Esophagus muscularis mucosa (tissue), 4 donors: ENCODE measurements at regions of chr3 and their contacts with region 1.

Region 1: DNA sequence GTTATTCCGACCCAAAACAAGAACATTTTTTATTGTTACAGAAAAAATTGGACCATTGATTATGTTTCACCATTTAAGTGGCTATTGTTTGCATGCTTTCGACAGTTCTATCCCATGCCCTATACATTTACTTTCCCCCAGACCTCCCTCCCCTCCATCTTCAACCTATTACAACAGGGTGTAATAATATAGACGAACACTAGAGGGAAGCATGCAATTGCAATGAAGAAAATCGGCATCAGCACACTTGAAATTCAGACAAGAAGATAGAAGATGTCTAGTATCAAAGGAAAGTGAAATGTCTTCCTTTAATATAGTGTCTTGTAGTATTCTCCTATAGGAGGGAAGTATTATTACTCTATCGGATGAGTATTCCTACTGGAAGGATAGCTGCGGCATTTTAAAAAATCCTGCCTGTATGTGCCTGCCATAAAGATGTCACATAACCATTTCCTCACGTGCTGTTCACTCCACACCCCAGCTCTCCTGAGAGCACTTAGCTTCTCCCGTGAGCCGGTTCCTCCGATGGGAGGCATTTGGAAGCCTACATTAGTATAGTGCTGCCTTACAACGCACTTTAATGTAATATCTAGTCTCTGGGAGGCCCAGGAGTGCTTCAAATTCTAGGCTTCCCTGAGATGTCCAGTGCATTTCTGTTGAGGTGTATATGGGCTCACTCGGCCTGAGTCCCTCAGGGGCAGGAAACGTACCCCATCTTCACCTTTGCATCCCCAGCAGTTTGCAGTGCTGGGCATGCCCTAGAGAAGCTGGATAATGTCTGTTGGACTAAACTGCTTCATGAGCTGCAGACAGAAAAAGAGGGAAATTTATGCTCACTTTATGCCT is 17.8 kb upstream of the ERICH6 start:
- DNase-seq: no peak
- H3K4me3 ChIP-seq: peak overlapping the region in 1 of 4 donors; percentile 19
- H3K27ac ChIP-seq: no peak overlapping the region
- H3K4me1 ChIP-seq: peaks cover 4 to 7% (median 5%) of the 10 kb centered on the region in 4 donors
- H3K27me3 ChIP-seq: no peaks in the 10 kb centered on the region
- CTCF ChIP-seq: peak; percentile 83 to 85 (median 83)
- EP300 ChIP-seq: no peak
- POLR2A ChIP-seq: no peak

Region 2: DNA sequence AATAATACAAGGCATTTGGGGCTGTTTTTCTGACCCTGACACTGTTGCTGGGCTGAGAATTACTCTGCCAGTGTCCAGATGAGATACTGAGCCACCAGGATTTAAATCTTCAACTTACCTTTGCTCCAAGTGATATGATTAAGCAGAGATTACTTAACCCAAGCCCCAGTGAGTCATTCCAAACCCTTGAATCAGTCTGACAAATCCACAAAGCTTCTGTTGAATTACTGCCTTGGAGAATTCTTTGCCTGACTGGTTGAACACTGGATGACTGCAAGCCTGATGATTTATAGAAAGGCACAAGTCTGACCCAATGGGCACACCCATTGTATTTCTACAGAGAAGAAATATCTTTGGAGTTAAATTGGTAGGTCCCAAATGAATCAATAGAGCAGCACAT is 401.6 kb before region 1 on chr3:
- intact Hi-C with region 1: no loop called
- DNase-seq: no peak
- H3K4me3 ChIP-seq: no peak overlapping the region
- H3K27ac ChIP-seq: no peak overlapping the region
- H3K4me1 ChIP-seq: peaks cover 0 to 5% (median 0%) of the 10 kb centered on the region in 4 donors
- H3K27me3 ChIP-seq: no peaks in the 10 kb centered on the region
- CTCF ChIP-seq: no peak
- EP300 ChIP-seq: no peak
- POLR2A ChIP-seq: no peak

Region 3: GRCh38 chr3:150763122-150763841 is 41.8 kb after region 1 on chr3 and contains the start of gene SIAH2:
- intact Hi-C with region 1: loop called (anchors 5 kb)
- DNase-seq: peak; percentile 98
- H3K4me3 ChIP-seq: peak within 1 kb of the TSS; percentile 80 to 93 (median 88)
- H3K27ac ChIP-seq: peak within 1 kb of the TSS; percentile 94 to 99 (median 98)
- H3K4me1 ChIP-seq: peaks cover 23 to 42% (median 40%) of the 10 kb centered on the region in 4 donors
- H3K27me3 ChIP-seq: no peaks in the 10 kb centered on the region
- CTCF ChIP-seq: no peak
- EP300 ChIP-seq: peak; percentile 46
- POLR2A ChIP-seq: peak; percentile 63
- total RNA-seq, gene SIAH2: 27.8 to 55.8 (median 43.3) TPM

Region 4: GRCh38 chr3:150870396-150870795 is 148.9 kb after region 1 on chr3:
- intact Hi-C with region 1: loop called (anchors 1 kb)
- DNase-seq: no peak
- H3K4me3 ChIP-seq: no peak overlapping the region
- H3K27ac ChIP-seq: no peak overlapping the region
- H3K4me1 ChIP-seq: peaks cover 0 to 3% (median 0%) of the 10 kb centered on the region in 4 donors
- H3K27me3 ChIP-seq: no peaks in the 10 kb centered on the region
- CTCF ChIP-seq: no peak
- EP300 ChIP-seq: no peak
- POLR2A ChIP-seq: no peak

Region 5: DNA sequence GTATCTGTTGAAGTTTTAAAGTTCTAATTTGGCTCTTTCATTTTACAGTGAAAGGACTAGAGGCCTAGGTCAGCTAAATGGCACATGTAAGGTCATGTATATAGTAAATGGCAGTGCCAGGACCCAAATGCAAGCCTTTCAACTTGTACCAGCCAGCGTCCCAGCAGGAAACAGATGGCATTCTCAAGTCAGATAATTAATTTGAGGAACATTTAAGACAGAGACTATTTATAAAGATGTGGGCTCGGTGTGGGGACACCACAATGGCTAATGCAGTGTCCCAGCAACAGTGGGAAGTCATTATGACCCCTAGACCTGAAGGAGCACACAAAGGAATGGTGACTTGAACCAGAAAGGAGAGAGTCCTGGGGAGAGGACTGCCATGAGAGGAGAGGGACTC is 177.6 kb after region 1 on chr3:
- intact Hi-C with region 1: no loop called
- DNase-seq: no peak
- H3K4me3 ChIP-seq: no peak overlapping the region
- H3K27ac ChIP-seq: no peak overlapping the region
- H3K4me1 ChIP-seq: no peaks in the 10 kb centered on the region
- H3K27me3 ChIP-seq: no peaks in the 10 kb centered on the region
- CTCF ChIP-seq: no peak
- EP300 ChIP-seq: no peak
- POLR2A ChIP-seq: no peak

Region 6: GRCh38 chr3:151146071-151146730 is 424.7 kb after region 1 on chr3:
- intact Hi-C with region 1: loop called (anchors 5 kb)
- DNase-seq: no peak
- H3K4me3 ChIP-seq: peak overlapping the region in 1 of 4 donors; percentile 11
- H3K27ac ChIP-seq: no peak overlapping the region
- H3K4me1 ChIP-seq: peaks cover 6 to 11% (median 7%) of the 10 kb centered on the region in 4 donors
- H3K27me3 ChIP-seq: no peaks in the 10 kb centered on the region
- CTCF ChIP-seq: peak; percentile 77 to 89 (median 82)
- EP300 ChIP-seq: no peak
- POLR2A ChIP-seq: no peak